ENCODE measurements at regions of chr2 and their contacts with region 1.

Region 1: DNA sequence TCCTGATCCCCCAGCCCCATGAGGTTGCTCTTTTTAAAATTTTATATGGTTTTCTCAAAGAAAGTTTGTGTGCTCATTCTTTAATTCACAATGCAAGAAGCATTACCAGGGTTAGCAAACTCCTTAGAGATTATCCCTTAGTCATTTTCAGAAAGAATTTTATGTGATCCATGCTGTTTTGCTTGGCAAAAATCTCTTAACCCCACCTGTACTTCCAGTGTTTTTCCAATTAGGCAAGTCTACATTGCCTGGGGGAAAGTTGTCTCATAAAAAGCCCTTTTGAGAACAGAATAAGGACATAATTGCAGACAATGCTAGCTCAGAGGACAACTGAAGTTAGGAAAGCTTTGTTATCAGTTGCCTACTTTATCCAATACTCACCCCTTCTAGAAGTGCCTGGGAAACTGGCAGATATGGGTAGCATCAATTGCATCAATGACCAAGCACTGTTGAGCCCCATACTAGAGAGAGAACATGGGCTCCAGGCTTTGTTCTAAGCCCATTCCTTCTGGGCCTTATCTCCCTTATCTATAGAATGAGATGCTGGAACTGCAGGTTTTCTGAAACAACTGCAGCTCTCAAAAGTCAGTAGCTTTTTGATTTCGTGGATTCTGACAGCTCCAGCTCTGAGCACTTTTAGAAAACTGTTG is 265.9 kb upstream of the SPHKAP start:
- DNase-seq: no peak
- ATAC-seq: no peak
- H3K4me3 ChIP-seq: no peak overlapping the region
- H3K27ac ChIP-seq: no peak overlapping the region
- H3K4me1 ChIP-seq: no peaks in the 10 kb centered on the region
- H3K27me3 ChIP-seq: no peaks in the 10 kb centered on the region
- CTCF ChIP-seq: no peak
- POLR2A ChIP-seq: no peak
- RAD21 ChIP-seq: no peak

Region 2: DNA sequence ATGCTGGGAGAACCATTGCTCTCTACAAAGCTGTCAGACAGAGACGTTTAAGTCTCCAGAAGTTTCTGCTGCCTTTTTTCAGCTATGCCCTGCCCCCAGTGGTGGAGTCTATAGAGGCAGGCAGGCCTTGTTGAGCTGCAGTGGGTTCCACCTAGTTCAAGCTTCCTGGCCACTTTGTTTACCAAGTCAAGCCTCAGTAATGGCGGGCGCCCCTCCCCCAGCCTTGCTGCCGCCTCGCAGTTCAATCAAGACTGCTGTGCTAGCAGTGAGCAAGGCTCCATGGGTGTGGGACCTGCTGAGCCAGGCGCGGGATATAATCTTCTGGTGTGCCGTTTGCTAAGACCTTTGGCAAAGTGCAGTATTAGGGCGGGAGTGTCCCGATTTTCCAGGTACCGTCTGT is 901.4 kb before region 1 on chr2:
- CTCF ChIA-PET with region 1: no interaction called
- POLR2A ChIA-PET with region 1: no interaction called
- dilution Hi-C with region 1: no loop called
- in situ Hi-C with region 1: no loop called
- intact Hi-C with region 1: no loop called
- DNase-seq: no peak
- ATAC-seq: no peak
- H3K4me3 ChIP-seq: no peak overlapping the region
- H3K27ac ChIP-seq: no peak overlapping the region
- H3K4me1 ChIP-seq: no peaks in the 10 kb centered on the region
- H3K27me3 ChIP-seq: no peaks in the 10 kb centered on the region
- CTCF ChIP-seq: no peak
- POLR2A ChIP-seq: no peak
- RAD21 ChIP-seq: no peak

Region 3: DNA sequence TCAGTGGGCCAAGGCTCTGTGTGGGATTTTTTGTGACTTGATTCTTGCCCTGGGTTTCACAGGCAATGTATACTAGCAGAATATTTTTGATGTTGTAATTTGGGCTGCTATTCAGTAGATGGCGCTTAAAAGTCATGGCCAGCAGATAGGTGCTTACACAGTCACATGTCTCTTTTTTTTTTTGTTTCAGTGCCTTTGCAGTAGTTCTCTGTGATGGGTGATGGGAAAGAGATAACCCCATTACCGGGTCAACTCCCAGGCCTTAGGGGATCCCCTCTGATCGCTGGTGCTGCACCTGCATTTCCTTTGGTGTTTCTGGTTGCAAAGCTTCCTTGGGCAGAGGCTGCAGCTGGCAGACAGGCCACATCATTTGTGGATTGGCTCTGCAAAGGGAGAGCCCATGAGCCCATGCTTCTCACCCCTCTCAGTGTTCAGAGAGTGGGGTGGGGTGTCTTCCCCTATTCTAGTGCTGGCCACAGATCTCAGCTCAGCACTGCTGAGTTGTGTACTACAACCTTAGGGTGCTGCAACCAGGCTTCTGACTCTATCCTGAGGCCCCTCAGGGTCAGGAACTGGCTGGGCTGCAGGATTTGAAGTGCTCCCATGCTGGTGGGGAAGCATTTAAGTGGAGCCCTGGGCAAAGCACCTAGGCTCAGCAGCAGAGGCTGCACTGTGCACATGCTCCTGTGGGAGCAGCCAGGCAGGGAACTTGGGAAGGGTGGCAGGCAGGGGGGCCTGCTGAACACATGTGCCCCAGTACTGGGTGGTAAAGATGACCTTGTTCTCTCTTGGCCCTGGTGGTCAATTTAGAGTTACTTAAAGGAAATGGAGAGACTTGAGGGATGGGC is 46.1 kb before region 1 on chr2:
- CTCF ChIA-PET with region 1: no interaction called
- POLR2A ChIA-PET with region 1: no interaction called
- dilution Hi-C with region 1: no loop called
- in situ Hi-C with region 1: no loop called
- intact Hi-C with region 1: loop called (anchors 2 kb)
- DNase-seq: no peak
- ATAC-seq: no peak
- H3K4me3 ChIP-seq: no peak overlapping the region
- H3K27ac ChIP-seq: no peak overlapping the region
- H3K4me1 ChIP-seq: no peaks in the 10 kb centered on the region
- H3K27me3 ChIP-seq: no peaks in the 10 kb centered on the region
- CTCF ChIP-seq: no peak
- POLR2A ChIP-seq: no peak
- RAD21 ChIP-seq: no peak